Breast epithelium (tissue), 4 donors: ENCODE measurements at regions of chr11 and their contacts with region 1.

Region 1: DNA sequence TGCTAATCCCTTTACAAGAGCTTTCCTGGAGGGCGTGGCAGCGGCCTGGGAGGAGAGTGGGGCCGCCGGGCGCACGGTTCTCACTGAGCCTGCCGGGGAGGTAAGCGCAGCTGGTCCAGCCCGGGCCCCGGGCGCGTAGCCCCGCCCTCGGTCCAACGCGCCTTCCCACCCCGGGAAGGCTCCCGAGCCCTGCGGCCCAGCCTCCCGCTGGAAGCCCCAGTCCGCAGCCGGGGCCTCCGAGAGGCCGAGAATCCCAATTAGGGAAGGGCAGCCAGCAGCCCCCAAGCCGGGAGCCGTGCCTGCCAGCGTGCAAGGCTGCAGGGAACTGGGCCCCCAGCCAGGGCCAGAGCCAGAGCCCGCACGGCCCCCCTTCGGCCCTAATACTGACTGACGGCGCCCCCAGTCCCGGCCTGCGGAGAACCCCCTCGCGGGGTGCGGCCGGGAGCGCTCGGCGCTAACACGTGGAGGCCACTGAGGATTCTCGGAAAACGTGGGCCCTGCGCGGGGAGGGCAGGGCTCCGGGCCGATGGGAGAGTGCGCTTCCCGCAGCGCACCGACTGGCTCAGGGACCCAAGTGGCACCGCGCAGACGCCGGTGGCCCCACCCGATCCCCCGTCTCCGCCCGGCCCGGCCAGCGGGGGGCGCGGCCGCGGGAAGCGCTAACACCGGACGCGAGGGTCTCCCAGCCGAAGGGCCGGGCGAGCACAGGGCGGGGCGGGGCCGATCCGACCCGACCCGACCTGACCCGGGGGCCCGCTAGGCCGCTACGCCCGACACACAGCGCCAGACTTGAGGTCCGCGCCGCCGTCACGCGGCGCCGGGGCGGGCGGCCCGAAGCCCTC is 5.7 kb downstream of the ZFTA start:
- DNase-seq: no peak
- H3K4me3 ChIP-seq: peak overlapping the region; percentile 43 to 68 (median 48)
- H3K27ac ChIP-seq: peak overlapping the region; percentile 69 to 88
- H3K4me1 ChIP-seq: peaks cover 0 to 16% of the 10 kb centered on the region in 2 donors
- H3K27me3 ChIP-seq: no peaks in the 10 kb centered on the region
- CTCF ChIP-seq: no peak
- POLR2A ChIP-seq: no peak

Region 2: GRCh38 chr11:63698976-63699733 is 63.7 kb before region 1 on chr11:
- intact Hi-C with region 1: no loop called
- DNase-seq: no peak
- H3K4me3 ChIP-seq: no peak overlapping the region
- H3K27ac ChIP-seq: peak overlapping the region; percentile 57 to 78
- H3K4me1 ChIP-seq: peaks cover 0 to 4% of the 10 kb centered on the region in 2 donors
- H3K27me3 ChIP-seq: no peaks in the 10 kb centered on the region
- CTCF ChIP-seq: no peak
- POLR2A ChIP-seq: no peak

Region 3: DNA sequence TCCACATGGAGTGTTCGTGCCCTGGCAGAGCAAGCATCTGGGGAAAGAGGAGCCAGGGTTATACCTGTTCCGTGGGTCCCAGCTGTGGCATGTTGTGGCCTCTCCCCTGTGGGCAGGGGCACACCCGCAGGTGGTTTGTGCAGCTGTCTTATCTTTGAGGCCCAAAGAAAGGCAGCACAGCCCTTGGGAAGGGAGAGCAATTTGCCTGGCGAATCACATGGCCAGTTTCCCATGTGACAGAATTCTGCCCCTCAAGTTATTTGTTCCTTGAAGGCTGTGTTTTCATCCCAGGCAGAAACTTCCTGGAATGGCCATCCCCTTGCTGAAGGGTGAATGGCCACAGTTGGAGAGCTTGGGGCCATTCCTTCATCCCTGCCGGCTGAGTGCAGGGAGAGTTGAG is 195.1 kb after region 1 on chr11:
- intact Hi-C with region 1: loop called (anchors 5 kb)
- DNase-seq: no peak
- H3K4me3 ChIP-seq: no peak overlapping the region
- H3K27ac ChIP-seq: no peak overlapping the region
- H3K4me1 ChIP-seq: no peaks in the 10 kb centered on the region
- H3K27me3 ChIP-seq: no peaks in the 10 kb centered on the region
- CTCF ChIP-seq: no peak
- POLR2A ChIP-seq: no peak